Activated T-helper 1 cell treated with anti-CD3 and anti-CD28 coated beads, Interleukin-12 subunit alpha, Interleukin-12 subunit beta, Interleukin-2, Interleukin-4 antibody, amounts not matched to agents 30 ng/mL and 10 ng/mL and 1 ng/mL, durations not matched to agents 14 hours and 24 hours and 36 hours (primary cell): ENCODE measurements at regions of chrX and their contacts with region 1.

Region 1: GRCh38 chrX:13167481-13168231 is 123.2 kb upstream of the FAM9C start:
- DNase-seq: no peak
- H3K4me3 Mint-ChIP-seq: peak overlapping the region; percentile 53
- H3K27ac Mint-ChIP-seq: peak overlapping the region; percentile 91
- H3K4me1 Mint-ChIP-seq: peaks cover 29% of the 10 kb centered on the region
- H3K27me3 Mint-ChIP-seq: no peaks in the 10 kb centered on the region

Region 2: GRCh38 chrX:13051529-13052172 is 116.0 kb before region 1 on chrX:
- intact Hi-C with region 1: loop called (anchors 5 kb)
- DNase-seq: no peak
- H3K4me3 Mint-ChIP-seq: peak overlapping the region; percentile 37
- H3K27ac Mint-ChIP-seq: peak overlapping the region; percentile 89
- H3K4me1 Mint-ChIP-seq: peaks cover 65% of the 10 kb centered on the region
- H3K27me3 Mint-ChIP-seq: peaks cover 1% of the 10 kb centered on the region

Region 3: DNA sequence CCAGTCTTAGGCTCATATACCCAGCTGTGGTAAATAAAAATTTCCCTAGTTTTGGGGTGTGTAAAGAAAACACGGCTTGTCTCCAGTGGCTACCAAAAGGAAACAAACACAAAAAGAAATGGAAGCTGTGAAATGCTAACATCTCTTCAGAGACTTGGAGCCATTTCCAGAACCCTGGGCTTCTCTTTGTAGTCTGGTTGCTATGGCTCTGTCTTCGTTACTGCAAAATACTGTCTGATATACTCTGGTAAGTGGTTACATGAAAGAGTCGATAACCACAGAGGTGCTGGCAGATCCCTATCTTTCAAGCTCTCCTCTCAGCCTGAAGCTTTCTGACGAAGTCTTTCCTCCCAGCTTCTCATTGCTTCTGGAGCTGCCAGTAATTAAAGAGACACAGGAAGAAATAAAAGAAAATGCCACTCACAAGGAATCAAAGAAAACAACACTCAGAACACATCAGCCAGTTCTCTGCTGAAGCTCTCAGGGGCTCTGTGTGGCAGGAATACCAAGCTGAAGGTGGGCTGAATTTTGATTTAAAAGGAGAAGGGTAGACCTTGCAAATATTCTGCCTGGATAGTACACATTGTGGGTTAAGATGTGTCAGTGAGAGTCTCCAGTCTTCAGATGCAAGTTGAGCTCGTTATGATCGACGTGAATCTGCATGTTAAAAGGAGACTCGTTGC is 15.7 kb before region 1 on chrX:
- intact Hi-C with region 1: loop called (anchors 1 kb)
- DNase-seq: peak; percentile 34
- H3K4me3 Mint-ChIP-seq: peak overlapping the region; percentile 66
- H3K27ac Mint-ChIP-seq: peak overlapping the region; percentile 71
- H3K4me1 Mint-ChIP-seq: peaks cover 14% of the 10 kb centered on the region
- H3K27me3 Mint-ChIP-seq: no peaks in the 10 kb centered on the region

Region 4: DNA sequence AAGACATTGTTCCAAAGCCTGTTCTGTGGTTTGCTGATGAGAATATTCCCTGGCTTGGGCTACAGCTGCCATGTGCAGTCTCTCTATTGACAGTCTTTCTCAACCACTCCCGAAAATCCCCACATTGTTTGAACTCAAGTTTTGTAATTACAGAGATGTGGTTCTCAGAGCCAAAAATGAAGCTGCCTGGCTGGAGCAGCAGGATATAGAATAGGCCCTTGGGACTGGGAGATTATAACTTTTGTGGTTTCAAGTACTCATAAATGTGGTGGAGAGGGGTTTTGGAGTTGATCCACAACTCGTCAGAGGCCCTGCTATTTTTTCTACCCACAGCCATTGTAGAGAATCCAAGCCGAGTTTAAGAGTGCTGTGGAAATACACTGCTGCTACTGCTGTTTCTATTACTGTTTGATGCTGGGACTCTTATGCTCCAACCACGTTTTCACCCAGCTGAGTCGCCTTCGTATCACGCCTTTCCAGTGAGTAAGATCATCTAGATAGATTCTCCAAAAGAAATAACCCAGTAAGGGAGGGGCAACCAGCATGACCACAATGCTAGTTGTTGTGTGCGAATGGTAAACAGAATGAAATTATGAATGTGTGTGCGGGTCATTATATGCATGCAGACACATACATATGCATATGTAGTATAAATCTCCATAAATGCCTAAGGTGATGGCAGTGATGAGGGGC is 209.3 kb after region 1 on chrX:
- intact Hi-C with region 1: loop called (anchors 5 kb)
- DNase-seq: no peak
- H3K4me3 Mint-ChIP-seq: no peak overlapping the region
- H3K27ac Mint-ChIP-seq: peak overlapping the region; percentile 27
- H3K4me1 Mint-ChIP-seq: peaks cover 41% of the 10 kb centered on the region
- H3K27me3 Mint-ChIP-seq: no peaks in the 10 kb centered on the region